ENCODE measurements at regions of chr19 and their contacts with region 1.

Region 1: GRCh38 chr19:17075035-17075863 is at the starts of genes HAUS8 and MYO9B:
- DNase-seq: peak; percentile 98 to 100 (median 100)
- ATAC-seq: peak; percentile 92
- H3K4me3 ChIP-seq: peak within 1 kb of the TSS; percentile 79 to 94
- H3K4me3 Mint-ChIP-seq: peak within 1 kb of the TSS; percentile 93
- H3K27ac ChIP-seq: peak within 1 kb of the TSS; percentile 85 to 88
- H3K27ac Mint-ChIP-seq: peak within 1 kb of the TSS; percentile 98
- H3K4me1 ChIP-seq: peaks cover 51% of the 10 kb centered on the region
- H3K4me1 Mint-ChIP-seq: peaks cover 62% of the 10 kb centered on the region
- H3K27me3 ChIP-seq: no peaks in the 10 kb centered on the region
- H3K27me3 Mint-ChIP-seq: no peaks in the 10 kb centered on the region
- CTCF ChIP-seq: no peak
- total RNA-seq, gene HAUS8: 29.3 to 33.9 TPM
- total RNA-seq, gene MYO9B: 221 to 238 TPM

Region 2: GRCh38 chr19:15125232-15126067 is 1949.8 kb before region 1 on chr19:
- CTCF ChIA-PET with region 1: no interaction called
- POLR2A ChIA-PET with region 1: no interaction called
- intact Hi-C with region 1: loop called in 1 of 2 experiments (anchors 10 kb)
- DNase-seq: peak; percentile 94 to 99 (median 97)
- ATAC-seq: peak; percentile 85
- H3K4me3 ChIP-seq: peak overlapping the region; percentile 98 to 99
- H3K4me3 Mint-ChIP-seq: peak overlapping the region; percentile 99
- H3K27ac ChIP-seq: peak overlapping the region; percentile 91 to 98
- H3K27ac Mint-ChIP-seq: peak overlapping the region; percentile 98
- H3K4me1 ChIP-seq: peaks cover 34% of the 10 kb centered on the region
- H3K4me1 Mint-ChIP-seq: peaks cover 47% of the 10 kb centered on the region
- H3K27me3 ChIP-seq: no peaks in the 10 kb centered on the region
- H3K27me3 Mint-ChIP-seq: no peaks in the 10 kb centered on the region
- CTCF ChIP-seq: no peak

Region 3: DNA sequence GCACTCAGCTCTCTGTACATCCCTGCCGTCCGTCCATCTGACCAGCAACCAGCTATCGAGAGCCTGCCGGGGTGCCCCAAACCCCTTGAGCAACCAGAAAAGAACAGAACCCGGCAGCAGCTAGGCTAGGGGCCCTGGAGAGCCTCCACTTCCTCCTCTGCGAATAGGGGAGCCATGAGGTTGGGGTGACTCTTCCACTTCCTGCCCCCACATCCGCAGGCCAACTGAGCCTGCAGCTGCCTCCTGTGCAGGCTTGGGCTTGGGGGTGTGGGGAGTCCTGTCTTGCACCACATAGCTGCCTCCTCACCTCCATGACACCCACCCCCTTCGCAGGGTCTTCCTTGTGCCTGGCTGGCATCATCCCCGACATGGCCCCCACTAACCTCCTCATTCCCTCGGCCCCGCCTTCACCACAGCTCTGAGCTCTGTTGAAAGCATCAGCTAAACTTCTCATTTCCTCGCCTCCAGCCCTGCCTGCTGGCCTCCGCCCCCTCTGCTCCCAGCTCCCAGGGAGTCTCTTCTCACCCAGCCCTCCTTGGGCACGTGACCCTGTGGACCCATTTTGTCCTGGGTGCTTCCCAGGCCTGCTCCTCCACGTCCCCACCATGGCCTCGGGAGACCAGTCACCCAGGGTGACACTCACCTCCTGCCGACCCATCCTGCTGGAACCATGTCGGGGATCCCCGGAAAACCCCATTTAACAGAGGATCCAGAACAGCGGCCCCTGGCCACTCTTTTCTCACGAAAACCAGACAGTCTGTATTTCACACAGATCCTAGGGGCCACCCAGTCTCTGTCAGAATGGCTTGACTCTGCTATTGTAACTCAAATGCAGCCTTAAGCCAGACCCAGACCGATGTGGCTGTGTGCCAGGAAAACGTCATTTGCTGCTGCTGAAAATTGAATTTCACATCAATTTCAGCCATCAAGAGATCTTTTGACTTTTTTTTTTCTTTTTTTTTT is 50.7 kb after region 1 on chr19:
- CTCF ChIA-PET with region 1: interaction called, 8 read pairs
- POLR2A ChIA-PET with region 1: interaction called, 41 read pairs
- intact Hi-C with region 1: loop called (anchors 1 kb)
- DNase-seq: peak; percentile 60 to 95 (median 80)
- ATAC-seq: peak; percentile 81
- H3K4me3 ChIP-seq: peak overlapping the region; percentile 40 to 41
- H3K4me3 Mint-ChIP-seq: peak overlapping the region; percentile 83
- H3K27ac ChIP-seq: peak overlapping the region; percentile 85 to 89
- H3K27ac Mint-ChIP-seq: peak overlapping the region; percentile 99
- H3K4me1 ChIP-seq: peaks cover 52% of the 10 kb centered on the region
- H3K4me1 Mint-ChIP-seq: peaks cover 71% of the 10 kb centered on the region
- H3K27me3 ChIP-seq: no peaks in the 10 kb centered on the region
- H3K27me3 Mint-ChIP-seq: no peaks in the 10 kb centered on the region
- CTCF ChIP-seq: no peak

Region 4: GRCh38 chr19:17215125-17215971 is 140.1 kb after region 1 on chr19 and contains the start of gene USE1:
- CTCF ChIA-PET with region 1: no interaction called
- POLR2A ChIA-PET with region 1: interaction called, 25 read pairs
- intact Hi-C with region 1: loop called in 1 of 2 experiments (anchors 1 kb)
- DNase-seq: peak; percentile 76 to 96 (median 88)
- ATAC-seq: peak; percentile 95
- H3K4me3 ChIP-seq: peak within 1 kb of the TSS; percentile 80 to 90
- H3K4me3 Mint-ChIP-seq: peak within 1 kb of the TSS; percentile 90
- H3K27ac ChIP-seq: peak within 1 kb of the TSS; percentile 65 to 97
- H3K27ac Mint-ChIP-seq: peak within 1 kb of the TSS; percentile 99
- H3K4me1 ChIP-seq: peaks cover 13% of the 10 kb centered on the region
- H3K4me1 Mint-ChIP-seq: peaks cover 15% of the 10 kb centered on the region
- H3K27me3 ChIP-seq: no peaks in the 10 kb centered on the region
- H3K27me3 Mint-ChIP-seq: no peaks in the 10 kb centered on the region
- CTCF ChIP-seq: no peak
- total RNA-seq, gene USE1: 23.1 to 25.3 TPM

Region 5: DNA sequence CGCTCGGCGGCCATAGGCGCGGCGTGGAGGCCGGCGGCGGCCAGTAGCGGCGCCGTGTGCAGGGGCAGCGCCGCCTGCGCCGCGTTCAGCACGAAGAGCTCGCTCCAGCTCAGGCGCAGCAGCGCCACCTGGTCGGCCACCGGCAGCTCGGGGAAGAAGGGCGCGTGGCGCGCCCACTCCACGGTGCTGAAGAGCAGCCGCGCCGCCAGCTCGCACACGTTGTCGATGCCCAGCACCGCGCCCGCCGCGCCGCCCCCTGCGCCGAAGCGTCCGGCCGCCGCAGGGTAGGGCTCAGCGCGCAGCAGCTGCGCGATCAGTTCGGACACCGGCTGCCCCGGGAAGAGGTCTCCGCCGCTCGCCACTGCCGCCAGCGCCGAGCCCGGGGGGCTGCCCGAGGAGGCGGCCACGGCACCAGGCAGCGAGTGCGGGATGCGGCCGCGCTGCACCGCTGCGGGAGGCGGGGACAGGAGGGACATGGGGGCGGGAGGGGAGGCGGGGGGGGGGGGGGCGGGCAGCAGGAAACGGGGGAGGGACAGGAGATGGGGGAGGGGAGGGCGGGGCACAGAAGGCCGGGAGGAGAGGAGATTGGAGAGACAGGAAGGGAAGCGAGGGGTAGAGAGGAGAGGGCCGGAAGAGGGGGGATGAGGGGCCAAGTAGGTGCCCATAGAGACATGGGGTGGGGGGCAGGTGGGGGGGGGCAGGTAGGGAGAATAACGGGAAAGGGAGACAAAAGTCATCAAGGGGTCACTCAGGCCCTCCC is 160.5 kb after region 1 on chr19:
- CTCF ChIA-PET with region 1: interaction called, 4 read pairs
- POLR2A ChIA-PET with region 1: interaction called, 3 read pairs
- intact Hi-C with region 1: loop called in 1 of 2 experiments (anchors 2 kb)
- DNase-seq: peak; percentile 52 to 91 (median 78)
- ATAC-seq: peak; percentile 89
- H3K4me3 ChIP-seq: peak overlapping the region; percentile 63 to 86
- H3K4me3 Mint-ChIP-seq: peak overlapping the region; percentile 78
- H3K27ac ChIP-seq: peak overlapping the region in 1 of 2 experiments; percentile 40
- H3K27ac Mint-ChIP-seq: no peak overlapping the region
- H3K4me1 ChIP-seq: peaks cover 13% of the 10 kb centered on the region
- H3K4me1 Mint-ChIP-seq: peaks cover 10% of the 10 kb centered on the region
- H3K27me3 ChIP-seq: no peaks in the 10 kb centered on the region
- H3K27me3 Mint-ChIP-seq: no peaks in the 10 kb centered on the region
- CTCF ChIP-seq: peak; percentile 58

Region 6: DNA sequence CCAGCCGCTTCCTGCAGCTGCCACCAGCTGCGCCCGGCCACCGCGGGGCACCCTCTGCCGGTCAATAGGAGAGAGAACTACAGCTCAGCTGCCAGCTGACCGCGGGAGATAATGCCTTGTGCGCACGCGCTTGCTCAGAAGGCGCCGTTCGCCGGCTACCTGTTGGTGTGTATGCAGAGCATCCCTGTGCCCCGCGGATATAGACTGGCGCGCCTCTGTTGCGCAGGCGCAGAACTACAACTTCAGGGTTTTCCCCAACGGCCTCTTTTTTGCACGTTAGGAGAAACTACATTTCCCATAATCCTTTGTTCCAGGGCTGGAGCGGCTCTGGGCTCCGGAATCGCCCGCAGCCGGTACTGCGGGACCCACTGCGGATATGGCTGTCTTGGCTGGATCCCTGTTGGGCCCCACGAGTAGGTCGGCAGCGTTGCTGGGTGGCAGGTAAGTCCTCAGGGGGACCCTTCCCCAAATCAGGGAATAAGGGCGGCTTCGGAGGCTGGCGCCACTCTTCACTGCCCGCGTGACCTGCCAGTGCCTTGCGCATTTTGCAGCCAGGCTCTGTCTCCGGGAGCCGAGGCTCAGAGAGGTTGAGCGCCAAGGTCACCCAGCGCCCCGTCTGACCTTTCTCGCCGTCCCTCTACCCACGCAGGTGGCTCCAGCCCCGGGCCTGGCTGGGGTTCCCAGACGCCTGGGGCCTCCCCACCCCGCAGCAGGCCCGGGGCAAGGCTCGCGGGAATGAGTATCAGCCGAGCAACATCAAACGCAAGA is 230.5 kb after region 1 on chr19 and contains the start of gene MRPL34:
- CTCF ChIA-PET with region 1: no interaction called
- POLR2A ChIA-PET with region 1: no interaction called
- intact Hi-C with region 1: loop called in 1 of 2 experiments (anchors 1 kb)
- DNase-seq: peak; percentile 85 to 99 (median 93)
- ATAC-seq: peak; percentile 53
- H3K4me3 ChIP-seq: peak within 1 kb of the TSS; percentile 77 to 79
- H3K4me3 Mint-ChIP-seq: peak within 1 kb of the TSS; percentile 89
- H3K27ac ChIP-seq: peak within 1 kb of the TSS; percentile 55 to 74
- H3K27ac Mint-ChIP-seq: peak within 1 kb of the TSS; percentile 91
- H3K4me1 ChIP-seq: peaks cover 44% of the 10 kb centered on the region
- H3K4me1 Mint-ChIP-seq: peaks cover 48% of the 10 kb centered on the region
- H3K27me3 ChIP-seq: no peaks in the 10 kb centered on the region
- H3K27me3 Mint-ChIP-seq: no peaks in the 10 kb centered on the region
- CTCF ChIP-seq: peak; percentile 57
- total RNA-seq, gene MRPL34: 29.5 to 33.8 TPM

Region 7: DNA sequence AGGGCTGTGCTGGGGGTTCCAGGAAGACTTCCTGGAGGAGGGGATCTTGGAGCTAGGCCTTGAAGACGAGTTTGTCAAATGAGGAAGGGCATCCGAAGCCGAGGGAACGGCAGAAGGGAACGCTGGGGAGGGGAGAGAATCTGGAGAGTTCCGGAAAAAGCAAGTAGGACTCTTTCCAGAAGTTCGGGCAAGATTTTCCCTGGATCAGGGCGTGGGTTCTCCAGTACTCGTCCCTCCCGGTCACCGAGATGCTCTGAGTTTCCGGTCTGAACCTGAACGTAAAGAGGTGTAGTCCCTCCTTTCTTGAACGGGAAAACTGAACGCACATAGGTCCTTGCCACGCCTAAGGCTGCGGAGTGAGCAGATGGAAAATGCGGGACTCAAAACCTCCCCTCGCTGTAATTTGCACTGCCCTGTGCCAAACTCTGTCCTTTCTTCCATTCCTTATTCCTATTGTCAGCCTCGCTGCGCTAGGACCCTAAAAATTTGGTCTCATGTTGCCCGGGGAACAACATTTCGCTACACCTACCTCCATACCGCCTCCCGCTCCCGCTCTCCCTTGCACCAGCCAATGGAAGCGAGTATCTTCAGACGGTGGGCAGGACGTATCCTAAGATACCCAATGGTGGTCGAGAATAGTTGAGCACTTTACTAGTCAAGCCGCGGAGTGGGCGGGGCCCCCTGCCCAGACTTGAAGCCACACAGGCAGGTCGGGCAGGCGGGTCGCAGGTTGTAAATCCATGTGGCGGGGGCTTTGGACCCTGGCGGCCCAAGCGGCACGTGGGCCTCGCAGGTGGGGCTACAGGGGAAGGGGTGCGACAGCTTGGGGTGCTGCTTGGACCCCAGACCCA is 261.8 kb after region 1 on chr19 and contains the start of gene GTPBP3:
- CTCF ChIA-PET with region 1: no interaction called
- POLR2A ChIA-PET with region 1: no interaction called
- intact Hi-C with region 1: loop called in 1 of 2 experiments (anchors 1 kb)
- DNase-seq: peak; percentile 90 to 99 (median 95)
- ATAC-seq: peak; percentile 90
- H3K4me3 ChIP-seq: peak within 1 kb of the TSS; percentile 90 to 98
- H3K4me3 Mint-ChIP-seq: peak within 1 kb of the TSS; percentile 88
- H3K27ac ChIP-seq: peak within 1 kb of the TSS; percentile 75 to 91
- H3K27ac Mint-ChIP-seq: peak within 1 kb of the TSS; percentile 91
- H3K4me1 ChIP-seq: peaks cover 34% of the 10 kb centered on the region
- H3K4me1 Mint-ChIP-seq: peaks cover 34% of the 10 kb centered on the region
- H3K27me3 ChIP-seq: no peaks in the 10 kb centered on the region
- H3K27me3 Mint-ChIP-seq: no peaks in the 10 kb centered on the region
- CTCF ChIP-seq: no peak
- total RNA-seq, gene GTPBP3: 20.8 to 25.7 TPM

Measured in CD8-positive, alpha-beta T cell (primary cell).